Aorta (tissue), 5 donors: ENCODE measurements at regions of chr6 and their contacts with region 1.

Region 1: GRCh38 chr6:133502441-133503259 is 261.5 kb downstream of the EYA4 start:
- DNase-seq: peak; percentile 76 to 82
- ATAC-seq: peak; percentile 88
- H3K4me3 ChIP-seq: no peak overlapping the region
- H3K27ac ChIP-seq: peak overlapping the region; percentile 54 to 80
- H3K4me1 ChIP-seq: peaks cover 2% of the 10 kb centered on the region in 2 donors
- H3K27me3 ChIP-seq: no peaks in the 10 kb centered on the region

Region 2: DNA sequence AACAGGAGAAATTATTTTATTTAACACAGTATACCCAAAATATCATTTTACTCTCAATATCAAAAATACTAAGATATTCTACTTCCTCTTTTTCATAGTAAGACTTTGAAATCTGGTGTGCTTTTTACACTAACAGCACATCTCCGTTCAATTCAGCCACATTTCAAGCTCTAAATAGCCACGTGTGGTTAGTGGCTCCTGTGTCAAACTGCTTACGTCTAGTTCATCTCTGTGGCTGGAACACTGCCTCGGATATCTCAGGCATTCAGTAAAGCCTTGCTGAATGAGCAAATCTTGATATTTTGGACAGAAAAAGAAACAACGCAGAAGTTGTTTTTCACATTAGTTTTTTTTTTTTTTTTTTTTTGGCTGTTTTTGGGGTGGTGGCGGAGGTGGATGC is 125.4 kb before region 1 on chr6:
- intact Hi-C with region 1: no loop called
- DNase-seq: no peak
- ATAC-seq: no peak
- H3K4me3 ChIP-seq: no peak overlapping the region
- H3K27ac ChIP-seq: no peak overlapping the region
- H3K4me1 ChIP-seq: no peaks in the 10 kb centered on the region
- H3K27me3 ChIP-seq: no peaks in the 10 kb centered on the region

Region 3: DNA sequence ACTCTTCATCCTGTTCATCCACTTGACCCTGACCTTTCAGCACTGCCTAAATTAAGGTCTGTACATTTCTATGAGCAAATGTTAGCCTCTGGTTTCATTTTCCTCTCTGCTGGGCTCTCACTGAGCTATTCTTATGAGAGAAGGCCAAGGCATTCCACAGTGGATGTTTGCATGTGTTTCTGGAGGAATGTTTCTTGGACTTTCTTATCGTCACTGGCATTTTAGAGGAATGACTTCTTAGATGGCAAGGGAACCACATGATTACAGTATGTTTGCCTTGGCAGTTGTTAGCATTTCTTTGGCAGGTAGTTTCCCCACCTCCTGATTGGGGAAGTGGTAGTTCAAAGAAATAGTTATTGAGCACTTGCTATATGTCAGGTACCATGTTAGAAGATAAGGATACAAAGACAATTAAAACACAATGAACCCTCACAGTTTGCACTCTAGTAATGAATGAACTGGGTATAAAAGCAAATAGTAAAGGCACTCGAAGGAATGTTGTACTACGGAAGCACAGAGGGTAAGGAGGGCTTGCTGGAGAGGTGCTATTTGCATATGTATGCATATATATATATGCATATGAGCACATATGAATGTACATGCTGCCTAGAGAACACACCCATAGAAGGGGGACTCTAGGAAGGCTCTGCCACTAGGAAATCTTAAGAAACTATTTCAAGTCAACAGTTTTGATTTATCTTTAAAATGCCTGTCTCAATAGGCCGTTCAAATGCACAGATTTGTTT is 45.9 kb after region 1 on chr6:
- intact Hi-C with region 1: loop called (anchors 2 to 10 kb)
- DNase-seq: no peak
- ATAC-seq: peak; percentile 42
- H3K4me3 ChIP-seq: no peak overlapping the region
- H3K27ac ChIP-seq: peak overlapping the region in 1 of 2 donors; percentile 63
- H3K4me1 ChIP-seq: peaks cover 2 to 5% of the 10 kb centered on the region in 2 donors
- H3K27me3 ChIP-seq: no peaks in the 10 kb centered on the region

Region 4: DNA sequence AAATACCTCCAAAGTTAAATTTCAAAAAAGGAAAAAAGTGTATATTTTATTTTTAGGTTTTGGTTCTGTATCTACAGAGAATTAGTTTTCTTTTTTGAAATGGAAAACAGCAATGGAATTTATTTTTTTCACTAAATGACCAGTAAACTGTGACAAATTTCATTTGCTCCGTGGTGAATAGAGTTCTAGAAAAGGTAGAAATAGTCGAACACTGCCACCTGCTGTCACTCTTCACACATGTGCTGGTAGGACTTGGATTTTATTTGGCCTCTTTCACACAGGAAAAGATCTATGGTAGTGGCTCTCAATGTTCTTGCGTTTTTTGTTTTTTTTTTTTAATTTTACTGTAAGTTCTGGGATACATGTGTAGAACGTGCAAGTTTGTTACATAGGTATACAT is 51.0 kb after region 1 on chr6:
- intact Hi-C with region 1: loop called (anchors 2 to 10 kb)
- DNase-seq: no peak
- ATAC-seq: no peak
- H3K4me3 ChIP-seq: no peak overlapping the region
- H3K27ac ChIP-seq: no peak overlapping the region
- H3K4me1 ChIP-seq: peaks cover 2 to 3% of the 10 kb centered on the region in 2 donors
- H3K27me3 ChIP-seq: no peaks in the 10 kb centered on the region

Region 5: GRCh38 chr6:133707456-133707855 is 204.8 kb after region 1 on chr6:
- intact Hi-C with region 1: no loop called
- DNase-seq: no peak
- ATAC-seq: no peak
- H3K4me3 ChIP-seq: no peak overlapping the region
- H3K27ac ChIP-seq: no peak overlapping the region
- H3K4me1 ChIP-seq: peaks cover 0 to 5% of the 10 kb centered on the region in 2 donors
- H3K27me3 ChIP-seq: no peaks in the 10 kb centered on the region